MCF 10A (cell line): ENCODE measurements at regions of chr13 and their contacts with region 1.

Region 1: GRCh38 chr13:40060296-40061007 is 405.0 kb downstream of the COG6 start:
- DNase-seq: peak; percentile 99
- H3K4me3 Mint-ChIP-seq: peak overlapping the region; percentile 67
- H3K27ac Mint-ChIP-seq: peak overlapping the region; percentile 96
- H3K4me1 Mint-ChIP-seq: peaks cover 74% of the 10 kb centered on the region
- H3K27me3 Mint-ChIP-seq: no peaks in the 10 kb centered on the region
- CTCF ChIP-seq: no peak

Region 2: GRCh38 chr13:39942552-39943273 is 117.7 kb before region 1 on chr13:
- CTCF ChIA-PET with region 1: interaction called, 11 read pairs
- POLR2A ChIA-PET with region 1: interaction called, 21 read pairs
- intact Hi-C with region 1: loop called (anchors 5 kb)
- DNase-seq: peak; percentile 95
- H3K4me3 Mint-ChIP-seq: no peak overlapping the region
- H3K27ac Mint-ChIP-seq: peak overlapping the region; percentile 88
- H3K4me1 Mint-ChIP-seq: peaks cover 21% of the 10 kb centered on the region
- H3K27me3 Mint-ChIP-seq: no peaks in the 10 kb centered on the region
- CTCF ChIP-seq: peak; percentile 98

Region 3: DNA sequence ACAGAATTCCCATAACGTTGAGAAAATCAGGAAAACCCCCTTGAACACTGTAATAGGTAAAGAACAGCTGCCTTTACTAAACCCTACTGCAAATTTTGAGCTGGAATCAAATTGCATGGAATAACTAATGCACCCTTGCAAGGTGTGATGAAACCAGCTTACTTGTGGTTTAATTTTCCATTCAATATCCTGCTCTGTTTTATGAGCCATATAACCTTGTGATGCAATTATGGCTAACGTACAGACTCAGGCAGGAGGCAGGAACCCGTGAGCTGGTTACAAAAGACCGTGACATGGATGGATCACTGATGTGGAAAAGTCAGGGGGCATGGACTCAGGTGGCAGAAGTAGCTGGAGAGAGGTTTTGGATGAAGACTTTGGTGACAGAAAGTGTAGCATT is 33.6 kb after region 1 on chr13:
- CTCF ChIA-PET with region 1: interaction called, 5 read pairs
- POLR2A ChIA-PET with region 1: interaction called, 17 read pairs
- intact Hi-C with region 1: no loop called
- DNase-seq: peak; percentile 88
- H3K4me3 Mint-ChIP-seq: no peak overlapping the region
- H3K27ac Mint-ChIP-seq: no peak overlapping the region
- H3K4me1 Mint-ChIP-seq: peaks cover 6% of the 10 kb centered on the region
- H3K27me3 Mint-ChIP-seq: no peaks in the 10 kb centered on the region
- CTCF ChIP-seq: no peak

Region 4: DNA sequence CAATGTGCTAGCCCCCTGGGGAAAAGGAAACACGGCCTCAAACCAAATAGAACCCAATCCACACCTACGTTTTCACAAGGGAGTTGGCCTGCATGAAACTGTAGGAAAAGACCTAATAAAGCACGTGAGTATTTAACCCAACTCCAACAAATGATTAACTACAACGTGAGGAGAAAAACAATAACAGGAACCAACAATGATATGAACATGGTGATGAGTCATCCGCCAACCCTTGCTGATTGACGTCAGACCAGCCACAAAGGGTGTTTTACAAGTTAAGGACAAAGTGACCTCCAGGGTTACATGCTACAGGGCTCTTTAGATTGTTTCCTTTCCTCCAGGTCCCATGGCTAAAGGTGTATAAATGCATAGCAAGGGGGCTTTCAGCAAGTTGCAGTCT is 55.6 kb after region 1 on chr13:
- CTCF ChIA-PET with region 1: interaction called, 4 read pairs
- POLR2A ChIA-PET with region 1: interaction called, 49 read pairs
- intact Hi-C with region 1: no loop called
- DNase-seq: peak; percentile 96
- H3K4me3 Mint-ChIP-seq: no peak overlapping the region
- H3K27ac Mint-ChIP-seq: peak overlapping the region; percentile 99
- H3K4me1 Mint-ChIP-seq: peaks cover 69% of the 10 kb centered on the region
- H3K27me3 Mint-ChIP-seq: no peaks in the 10 kb centered on the region
- CTCF ChIP-seq: no peak

Region 5: GRCh38 chr13:40149611-40150274 is 89.3 kb after region 1 on chr13:
- CTCF ChIA-PET with region 1: interaction called, 3 read pairs
- POLR2A ChIA-PET with region 1: interaction called, 21 read pairs
- intact Hi-C with region 1: loop called (anchors 5 kb)
- DNase-seq: peak; percentile 90
- H3K4me3 Mint-ChIP-seq: no peak overlapping the region
- H3K27ac Mint-ChIP-seq: peak overlapping the region; percentile 94
- H3K4me1 Mint-ChIP-seq: peaks cover 50% of the 10 kb centered on the region
- H3K27me3 Mint-ChIP-seq: no peaks in the 10 kb centered on the region
- CTCF ChIP-seq: no peak

Region 6: DNA sequence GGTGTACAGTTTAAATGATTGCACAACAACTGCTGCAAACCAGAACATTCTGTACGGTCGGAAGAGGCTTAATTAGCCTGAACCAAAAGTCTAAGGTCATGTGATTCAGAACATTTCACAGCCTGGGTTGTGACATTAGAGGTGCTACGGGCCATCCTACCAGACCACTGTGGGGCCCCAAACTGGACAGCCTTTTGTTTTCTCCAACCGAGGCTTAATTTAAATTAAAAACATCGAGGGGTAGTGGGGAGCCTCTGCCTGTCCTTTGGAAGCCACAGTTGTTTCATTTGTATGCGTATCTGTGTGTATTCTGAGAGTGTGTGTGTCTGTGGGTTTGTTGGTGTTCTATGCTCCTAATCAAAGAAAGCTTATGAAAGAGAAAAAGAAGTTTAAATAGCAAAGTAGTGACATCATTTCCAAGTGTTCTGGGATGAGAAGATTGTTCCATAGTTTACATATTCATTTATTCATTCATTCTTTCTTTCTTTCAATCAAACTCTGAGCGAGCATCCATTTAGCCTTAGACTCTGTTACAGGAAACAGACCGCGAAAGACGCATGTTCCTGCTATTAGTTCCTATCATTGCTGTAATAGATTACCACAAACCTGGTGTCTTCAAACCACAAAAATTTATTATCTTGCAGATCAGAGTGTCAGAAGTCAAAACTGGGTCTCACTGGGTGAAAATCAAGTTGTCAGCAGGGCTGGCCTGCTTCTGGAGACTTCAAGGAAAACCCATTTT is 161.2 kb after region 1 on chr13:
- CTCF ChIA-PET with region 1: interaction called, 3 read pairs
- POLR2A ChIA-PET with region 1: interaction called, 12 read pairs
- intact Hi-C with region 1: no loop called
- DNase-seq: peak; percentile 86
- H3K4me3 Mint-ChIP-seq: peak overlapping the region; percentile 28
- H3K27ac Mint-ChIP-seq: peak overlapping the region; percentile 95
- H3K4me1 Mint-ChIP-seq: peaks cover 38% of the 10 kb centered on the region
- H3K27me3 Mint-ChIP-seq: no peaks in the 10 kb centered on the region
- CTCF ChIP-seq: no peak

Region 7: DNA sequence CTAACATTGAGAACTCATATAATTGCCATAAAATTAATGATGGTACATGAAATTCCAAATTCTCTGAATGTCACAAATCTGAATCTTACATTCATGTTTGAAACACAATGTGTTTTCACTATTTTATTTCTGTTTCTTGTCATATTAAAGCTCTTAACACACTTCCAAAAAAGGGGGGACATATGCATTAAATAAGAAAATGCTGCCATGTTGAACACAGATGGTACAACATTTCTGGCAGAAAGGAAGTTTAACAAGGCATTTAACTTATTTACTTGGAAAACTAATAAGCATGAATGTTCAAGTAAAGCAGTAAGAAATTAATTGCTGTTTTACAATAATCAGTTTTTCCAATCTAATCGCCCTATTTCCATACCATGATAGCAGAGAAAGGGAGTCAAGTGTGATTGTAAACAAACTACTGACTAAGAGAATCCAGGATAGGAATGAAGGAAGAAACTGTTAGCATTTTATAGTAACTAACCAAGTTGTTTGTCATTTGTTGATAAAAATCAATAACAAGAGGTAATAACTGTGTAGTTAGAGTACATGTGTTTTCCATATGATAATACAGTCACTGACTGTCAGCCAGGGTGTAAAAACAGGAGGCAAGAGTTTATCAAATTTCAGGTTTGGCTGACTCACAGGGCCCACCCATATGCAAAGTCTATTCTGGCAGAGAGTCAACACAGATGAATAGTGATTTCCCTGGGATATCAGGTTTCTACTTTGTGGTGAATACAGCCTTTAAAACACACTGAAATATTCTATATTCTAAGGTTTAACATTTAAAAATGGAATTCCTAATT is 611.7 kb after region 1 on chr13:
- CTCF ChIA-PET with region 1: no interaction called
- POLR2A ChIA-PET with region 1: interaction called, 14 read pairs
- intact Hi-C with region 1: no loop called
- DNase-seq: peak; percentile 90
- H3K4me3 Mint-ChIP-seq: no peak overlapping the region
- H3K27ac Mint-ChIP-seq: peak overlapping the region; percentile 22
- H3K4me1 Mint-ChIP-seq: peaks cover 29% of the 10 kb centered on the region
- H3K27me3 Mint-ChIP-seq: no peaks in the 10 kb centered on the region
- CTCF ChIP-seq: no peak

Region 8: DNA sequence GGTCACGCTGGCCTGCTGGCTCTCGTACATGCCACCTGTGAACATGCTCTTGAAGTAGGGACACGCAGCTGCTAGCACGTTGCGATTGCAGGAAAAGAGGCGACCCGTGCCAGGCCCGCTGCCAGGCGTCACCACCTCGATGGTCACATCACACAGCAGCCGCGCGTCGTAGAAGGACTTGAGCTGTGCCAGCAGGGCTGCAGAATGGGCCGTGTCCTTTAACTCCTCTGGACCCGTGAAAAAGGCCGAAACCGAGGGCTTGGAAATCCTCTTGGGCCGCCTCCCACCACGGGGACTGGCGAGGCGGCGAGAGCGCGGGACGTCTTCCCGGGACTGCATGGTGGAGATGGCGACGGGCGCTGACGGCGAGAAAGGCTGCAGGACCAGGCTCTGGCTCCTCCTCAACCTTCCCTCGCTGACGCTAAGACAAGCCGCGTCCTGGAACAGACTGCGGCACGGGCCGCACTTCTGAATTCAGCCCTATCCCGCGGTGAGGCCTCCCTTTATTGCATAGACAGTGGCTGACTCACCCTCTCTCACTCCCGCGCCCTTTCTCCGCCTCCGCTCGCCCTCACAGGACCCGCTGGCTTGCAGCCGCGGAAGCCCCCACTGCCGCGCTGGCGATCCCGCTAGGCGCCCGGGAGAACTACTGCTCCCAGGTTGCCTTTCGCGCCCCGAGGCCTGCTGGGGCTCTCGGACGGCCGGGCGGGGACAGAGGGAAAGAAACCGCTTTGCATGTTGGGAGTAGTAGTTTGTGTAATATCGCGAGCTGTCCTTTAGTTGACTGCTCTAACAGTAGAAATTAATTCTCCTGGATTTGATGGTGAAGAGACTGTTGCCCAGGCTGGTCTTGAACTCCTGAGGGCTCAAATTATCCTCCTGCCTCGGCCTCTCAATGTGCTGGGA is 1133.7 kb after region 1 on chr13 and contains the start of gene KBTBD7:
- CTCF ChIA-PET with region 1: no interaction called
- POLR2A ChIA-PET with region 1: no interaction called
- intact Hi-C with region 1: no loop called
- DNase-seq: peak; percentile 84
- H3K4me3 Mint-ChIP-seq: peak within 1 kb of the TSS; percentile 81
- H3K27ac Mint-ChIP-seq: peak within 1 kb of the TSS; percentile 83
- H3K4me1 Mint-ChIP-seq: peaks cover 10% of the 10 kb centered on the region
- H3K27me3 Mint-ChIP-seq: no peaks in the 10 kb centered on the region
- CTCF ChIP-seq: no peak
- total RNA-seq, gene KBTBD7: 1.4 and 1.8 TPM in 2 replicates